ENCODE measurements at regions of chr17 and their contacts with region 1.

Region 1: DNA sequence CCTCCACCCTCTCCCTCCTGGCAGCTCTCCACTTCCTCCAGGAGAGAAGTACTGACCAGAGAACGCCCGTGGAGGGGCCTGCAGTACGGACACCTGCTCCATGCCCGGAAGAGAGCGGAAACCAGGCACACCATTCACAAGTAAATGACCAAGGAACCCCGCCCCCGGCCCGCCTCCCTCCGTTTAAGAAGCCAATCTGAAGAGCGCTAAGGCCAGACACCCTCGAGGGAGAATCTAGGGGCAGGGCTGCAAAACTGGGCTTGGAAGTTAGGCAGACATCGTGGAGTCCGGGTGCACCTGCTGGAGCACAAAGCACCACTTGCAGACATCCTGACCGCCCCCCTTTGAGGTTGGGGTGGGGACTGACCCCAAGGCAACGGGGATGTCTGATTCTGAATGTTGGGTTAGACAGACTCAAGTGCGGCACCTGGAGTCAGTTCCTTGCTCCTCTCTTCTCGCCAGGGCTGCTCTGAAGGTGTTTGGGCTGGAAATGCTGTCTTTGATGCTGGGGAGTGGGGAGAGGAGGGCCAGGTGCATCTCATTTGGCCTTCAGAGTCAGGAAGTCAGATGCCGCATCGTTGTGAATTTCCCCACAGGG is 964 bp upstream of the FAAP100 start:
- DNase-seq: peak in 5 of 10 donors; percentile 23 to 72 (median 62)
- H3K4me3 ChIP-seq: peak overlapping the region; percentile 67 to 100 (median 95)
- H3K27ac ChIP-seq: peak overlapping the region in 53 of 59 donors; percentile 51 to 93 (median 84)
- H3K27me3 ChIP-seq: no peaks in the 10 kb centered on the region
- CTCF ChIP-seq: peak in 1 of 56 donors; percentile 6

Region 2: DNA sequence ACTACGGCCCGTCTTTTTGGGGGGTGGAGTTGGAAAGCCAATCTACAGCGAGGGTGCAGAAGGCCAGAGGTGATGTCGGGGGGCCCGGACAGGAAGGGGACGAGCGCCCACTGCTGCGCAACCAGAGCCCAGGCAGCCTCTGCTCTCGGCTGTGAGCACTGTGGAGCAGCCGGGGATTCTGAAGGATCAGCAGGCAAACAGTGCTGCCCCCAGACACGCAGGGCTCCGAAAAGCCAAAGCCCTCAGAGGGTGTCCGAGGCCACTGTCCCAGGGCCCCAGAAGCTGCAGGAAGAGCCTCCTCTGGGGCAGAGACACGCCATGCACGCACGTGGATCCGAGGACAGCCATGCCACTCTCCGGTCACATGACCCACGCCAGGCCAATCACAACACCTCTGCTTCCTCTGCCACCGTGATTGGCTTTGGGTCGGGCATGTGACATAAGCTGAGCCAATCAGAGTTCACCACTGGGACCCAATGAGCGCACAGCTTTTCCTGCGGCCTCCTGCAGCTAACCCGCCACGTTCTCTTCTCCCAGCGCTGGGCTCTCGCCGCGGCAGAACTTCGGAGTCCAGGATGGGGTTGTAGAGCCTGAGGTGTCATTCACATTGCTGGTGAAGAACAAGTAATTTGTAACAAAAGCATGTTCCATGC is 81.2 kb before region 1 on chr17:
- intact Hi-C with region 1: no loop called
- DNase-seq: peak; percentile 56 to 88 (median 83)
- H3K4me3 ChIP-seq: peak overlapping the region in 54 of 59 donors; percentile 10 to 54 (median 42)
- H3K27ac ChIP-seq: peak overlapping the region in 32 of 59 donors; percentile 7 to 80 (median 64)
- H3K27me3 ChIP-seq: no peaks in the 10 kb centered on the region
- CTCF ChIP-seq: peak in 50 of 56 donors; percentile 14 to 64 (median 42)

Region 3: GRCh38 chr17:81512560-81513371 is 40.4 kb before region 1 on chr17 and contains the start of gene ACTG1:
- intact Hi-C with region 1: loop called (anchors 2 to 5 kb)
- DNase-seq: peak; percentile 83 to 94 (median 92)
- H3K4me3 ChIP-seq: peak within 1 kb of the TSS; percentile 77 to 100 (median 94)
- H3K27ac ChIP-seq: peak within 1 kb of the TSS; percentile 88 to 100 (median 99)
- H3K27me3 ChIP-seq: peaks cover 0 to under 1% (median 0%) of the 10 kb centered on the region in 45 donors
- CTCF ChIP-seq: peak in 2 of 56 donors; percentile 11 to 17
- total RNA-seq, gene ACTG1: 558 to 1,589 (median 1,117) TPM

Region 4: GRCh38 chr17:81601525-81602120 is 48.5 kb after region 1 on chr17:
- intact Hi-C with region 1: loop called in 1 of 2 experiments (anchors 5 kb)
- DNase-seq: peak in 2 of 10 donors; percentile 41 to 54
- H3K4me3 ChIP-seq: no peak overlapping the region
- H3K27ac ChIP-seq: peak overlapping the region in 21 of 59 donors; percentile 2 to 69 (median 23)
- H3K27me3 ChIP-seq: no peaks in the 10 kb centered on the region
- CTCF ChIP-seq: peak; percentile 61 to 90 (median 77)

Region 5: GRCh38 chr17:81621494-81622130 is 68.5 kb after region 1 on chr17:
- intact Hi-C with region 1: no loop called
- DNase-seq: peak in 1 of 10 donors; percentile 21
- H3K4me3 ChIP-seq: peak overlapping the region in 1 of 59 donors; percentile 4
- H3K27ac ChIP-seq: peak overlapping the region in 34 of 59 donors; percentile 1 to 73 (median 38)
- H3K27me3 ChIP-seq: no peaks in the 10 kb centered on the region
- CTCF ChIP-seq: no peak

Region 6: GRCh38 chr17:81636505-81637288 is 83.6 kb after region 1 on chr17 and contains the starts of genes NPLOC4 and TSPAN10:
- intact Hi-C with region 1: loop called in 1 of 2 experiments (anchors 5 kb)
- DNase-seq: peak; percentile 64 to 87 (median 76)
- H3K4me3 ChIP-seq: peak within 1 kb of the TSS; percentile 71 to 99 (median 95)
- H3K27ac ChIP-seq: peak within 1 kb of the TSS; percentile 75 to 98 (median 92)
- H3K27me3 ChIP-seq: no peaks in the 10 kb centered on the region
- CTCF ChIP-seq: peak in 18 of 56 donors; percentile 6 to 63 (median 25)
- total RNA-seq, gene NPLOC4: 67.3 to 117 (median 92.7) TPM
- total RNA-seq, gene TSPAN10: 0.20 to 2.8 (median 0.77) TPM in 113 of 120 experiments, not detected in the others

Region 7: GRCh38 chr17:81702971-81703746 is 150.0 kb after region 1 on chr17 and contains the start of gene MRPL12:
- intact Hi-C with region 1: no loop called
- DNase-seq: peak; percentile 92 to 98 (median 96)
- H3K4me3 ChIP-seq: peak within 1 kb of the TSS; percentile 61 to 99 (median 95)
- H3K27ac ChIP-seq: peak within 1 kb of the TSS; percentile 18 to 98 (median 89)
- H3K27me3 ChIP-seq: no peaks in the 10 kb centered on the region
- CTCF ChIP-seq: peak in 51 of 56 donors; percentile 13 to 70 (median 48)
- total RNA-seq, gene MRPL12: 25.2 to 52.1 (median 36.6) TPM